ENCODE measurements at regions of chr17 and their contacts with region 1.

Region 1: DNA sequence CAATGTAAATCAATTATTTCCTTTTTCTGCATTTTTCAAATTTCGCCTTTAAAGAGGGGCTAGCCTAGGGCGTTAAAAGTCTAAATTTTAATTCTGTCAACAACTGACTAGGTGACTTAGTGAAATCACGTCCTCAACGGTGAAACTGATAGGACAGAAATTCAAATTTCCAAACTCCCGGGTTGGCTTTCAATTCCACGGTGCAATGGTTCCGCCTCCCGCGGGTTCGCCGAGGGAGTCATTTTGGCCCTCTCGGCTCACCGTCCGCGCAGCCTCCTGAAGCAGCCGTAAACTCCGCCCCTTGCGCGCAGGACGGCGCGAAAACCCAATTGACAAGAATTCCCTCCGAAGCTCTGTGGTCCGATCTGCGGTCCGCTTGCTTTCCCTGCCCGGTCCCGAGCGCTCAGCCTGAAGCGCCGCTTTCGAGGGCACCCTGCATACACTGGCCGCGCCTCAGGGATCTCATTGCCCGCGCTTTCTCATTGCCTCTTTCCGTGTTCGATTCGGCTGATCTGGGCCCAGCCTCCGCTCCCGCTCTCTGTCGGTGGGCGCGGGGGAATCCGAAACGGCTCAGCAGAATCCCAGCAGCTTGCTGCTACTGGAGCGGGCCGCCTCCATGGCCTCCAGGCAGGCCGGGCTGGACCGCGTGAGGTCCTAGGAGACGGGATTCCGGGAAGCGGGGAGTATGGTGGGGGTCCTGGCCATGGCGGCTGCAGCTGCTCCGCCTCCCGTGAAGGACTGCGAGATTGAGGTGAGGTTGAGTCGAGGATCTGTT is at the start of gene ATAD5:
- DNase-seq: peak; percentile 91
- H3K4me3 ChIP-seq: peak within 1 kb of the TSS; percentile 81
- H3K27ac ChIP-seq: peak within 1 kb of the TSS; percentile 60
- H3K4me1 ChIP-seq: peaks cover 21% of the 10 kb centered on the region
- CTCF ChIP-seq: no peak
- total RNA-seq, gene ATAD5: 20.9 and 21.4 TPM in 2 replicates

Region 2: GRCh38 chr17:30716461-30717300 is 115.2 kb before region 1 on chr17:
- CTCF ChIA-PET with region 1: no interaction called
- POLR2A ChIA-PET with region 1: interaction called, 12 read pairs
- intact Hi-C with region 1: no loop called
- DNase-seq: peak; percentile 50
- H3K4me3 ChIP-seq: no peak overlapping the region
- H3K27ac ChIP-seq: no peak overlapping the region
- H3K4me1 ChIP-seq: peaks cover 38% of the 10 kb centered on the region
- CTCF ChIP-seq: peak; percentile 70

Region 3: DNA sequence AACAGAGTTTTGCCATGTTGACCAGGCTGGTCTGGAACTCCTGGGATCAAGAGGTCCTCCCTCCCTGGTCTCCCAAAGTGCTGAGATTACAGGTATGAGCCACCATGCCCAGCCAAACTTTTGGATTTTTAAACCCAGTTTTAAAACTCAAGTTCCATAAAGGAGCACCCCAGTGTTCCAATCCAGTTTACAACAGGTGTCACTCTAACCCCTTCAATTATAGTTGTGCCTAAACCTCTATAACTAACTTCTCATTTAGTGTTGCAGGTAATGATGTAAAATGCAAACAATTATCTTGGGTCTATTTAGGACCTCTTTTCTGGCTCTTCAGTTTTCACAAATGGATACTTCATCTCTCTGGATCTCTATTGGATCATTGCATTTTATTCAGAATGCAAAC is 82.1 kb after region 1 on chr17:
- CTCF ChIA-PET with region 1: no interaction called
- POLR2A ChIA-PET with region 1: no interaction called
- intact Hi-C with region 1: no loop called
- DNase-seq: no peak
- H3K4me3 ChIP-seq: no peak overlapping the region
- H3K27ac ChIP-seq: no peak overlapping the region
- H3K4me1 ChIP-seq: peaks cover 8% of the 10 kb centered on the region
- CTCF ChIP-seq: peak; percentile 44; the same call in 1 of the 2 replicates